HCT116 (cell line): ENCODE measurements at regions of chr1 and their contacts with region 1.

Region 1: DNA sequence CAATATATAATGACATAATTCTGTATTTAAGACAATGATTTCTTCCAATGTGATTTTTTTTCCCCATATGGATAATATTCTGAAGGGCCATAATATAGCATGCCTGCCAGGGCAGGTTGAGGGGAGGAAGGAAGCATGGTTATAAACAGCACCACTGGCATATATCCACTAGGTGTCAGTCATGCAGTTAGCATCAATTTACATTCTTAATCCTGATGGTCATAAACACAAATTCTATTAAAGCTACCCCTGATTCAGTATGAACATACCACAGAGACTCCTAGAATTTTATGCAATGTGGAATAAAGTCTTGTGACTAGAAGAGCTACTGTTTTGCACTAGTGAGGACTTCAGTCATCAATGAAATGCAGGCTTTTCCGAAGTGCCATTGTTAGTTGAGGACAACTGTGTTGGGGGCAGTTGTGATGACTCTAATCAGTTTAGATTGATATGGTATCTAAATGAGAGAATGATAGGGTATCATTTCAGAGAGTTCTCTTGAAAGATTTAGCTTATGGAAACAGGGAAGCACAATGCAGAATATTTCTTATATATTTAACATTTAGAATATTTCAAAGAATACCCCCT is 342.7 kb upstream of the NR5A2 start:
- DNase-seq: peak; percentile 74
- ATAC-seq: peak; percentile 91
- H3K4me3 ChIP-seq: peak overlapping the region in 1 of 2 experiments; percentile 18; a peak in 1 of 4 replicates
- H3K27ac ChIP-seq: peak overlapping the region; percentile 30; the same call in 1 of the 2 replicates
- H3K4me1 ChIP-seq: peaks cover 14 to 49% of the 10 kb centered on the region in 2 experiments
- H3K27me3 ChIP-seq: no peaks in the 10 kb centered on the region
- CTCF ChIP-seq: peak; percentile 67 to 88 (median 75)
- POLR2A ChIP-seq: no peak
- RAD21 ChIP-seq: peak; percentile 93

Region 2: GRCh38 chr1:199716729-199717128 is 31.9 kb after region 1 on chr1:
- CTCF ChIA-PET with region 1: no interaction called
- POLR2A ChIA-PET with region 1: no interaction called
- RAD21 ChIA-PET with region 1: no interaction called
- intact Hi-C with region 1: no loop called
- DNase-seq: no peak
- ATAC-seq: no peak
- H3K4me3 ChIP-seq: no peak overlapping the region
- H3K27ac ChIP-seq: no peak overlapping the region
- H3K4me1 ChIP-seq: no peaks in the 10 kb centered on the region
- H3K27me3 ChIP-seq: no peaks in the 10 kb centered on the region
- CTCF ChIP-seq: no peak
- POLR2A ChIP-seq: no peak
- RAD21 ChIP-seq: no peak

Region 3: DNA sequence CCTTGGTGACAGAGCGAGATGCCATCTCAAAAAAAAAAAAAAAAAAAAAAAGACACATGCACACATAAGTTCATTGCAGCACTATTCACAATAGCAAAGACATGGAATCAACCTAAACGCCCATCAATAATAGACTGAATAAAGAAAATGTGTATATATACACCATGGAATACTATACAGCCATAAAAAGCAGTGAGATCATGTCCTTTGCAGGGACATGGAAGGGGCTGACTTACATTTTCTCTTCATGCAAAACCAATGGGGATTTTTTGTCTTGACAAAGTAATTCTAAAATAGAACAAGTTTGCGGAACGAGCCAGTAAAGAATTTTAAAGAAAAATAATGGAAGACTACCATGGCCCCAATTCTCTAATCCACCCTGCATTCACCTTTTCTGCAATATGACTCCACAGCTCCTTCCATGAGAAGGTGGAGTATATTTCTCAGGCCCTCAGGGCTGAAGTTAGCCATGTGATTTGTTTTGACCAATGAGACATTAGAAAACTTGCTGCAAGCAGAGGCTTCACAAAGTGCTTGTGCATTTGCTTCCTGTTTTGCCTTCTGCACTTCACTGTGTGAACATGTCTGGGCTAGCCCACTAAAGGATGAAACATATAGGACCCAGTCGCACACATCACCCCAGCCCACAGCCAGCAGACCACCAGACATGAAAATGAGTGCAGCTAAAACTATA is 264.0 kb after region 1 on chr1:
- CTCF ChIA-PET with region 1: no interaction called
- POLR2A ChIA-PET with region 1: no interaction called
- RAD21 ChIA-PET with region 1: no interaction called
- intact Hi-C with region 1: loop called (anchors 10 kb)
- DNase-seq: peak; percentile 39
- ATAC-seq: peak; percentile 89
- H3K4me3 ChIP-seq: no peak overlapping the region
- H3K27ac ChIP-seq: peak overlapping the region; percentile 29; the same call in 1 of the 2 replicates
- H3K4me1 ChIP-seq: peaks cover 0 to 10% of the 10 kb centered on the region in 2 experiments; a peak in 2 of 4 replicates
- H3K27me3 ChIP-seq: no peaks in the 10 kb centered on the region
- CTCF ChIP-seq: no peak
- POLR2A ChIP-seq: no peak
- RAD21 ChIP-seq: no peak

Region 4: DNA sequence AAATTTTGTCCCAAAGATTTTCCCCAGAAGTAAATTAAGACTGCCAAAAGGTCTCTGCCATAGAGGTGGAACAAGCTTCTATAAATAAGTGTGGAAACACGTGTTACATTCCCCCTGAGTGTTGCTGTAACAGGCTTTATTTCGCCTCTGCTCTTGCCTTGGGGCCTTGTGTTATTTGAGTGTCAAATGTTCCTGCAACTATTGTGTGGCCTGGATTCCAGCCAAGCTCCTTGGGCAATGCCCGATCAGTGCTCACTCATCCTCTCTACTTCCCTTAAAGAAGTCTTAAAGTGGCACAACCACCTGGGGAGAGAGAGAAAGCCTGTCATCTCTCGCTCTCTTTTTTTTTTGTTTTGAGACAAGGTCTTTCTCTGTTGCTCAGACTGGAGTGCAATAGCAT is 499.4 kb after region 1 on chr1:
- CTCF ChIA-PET with region 1: interaction called, 10 read pairs
- POLR2A ChIA-PET with region 1: no interaction called
- RAD21 ChIA-PET with region 1: no interaction called
- intact Hi-C with region 1: loop called (anchors 1 kb)
- DNase-seq: peak; percentile 42
- ATAC-seq: peak; percentile 56
- H3K4me3 ChIP-seq: no peak overlapping the region
- H3K27ac ChIP-seq: no peak overlapping the region
- H3K4me1 ChIP-seq: peaks cover 22 to 51% of the 10 kb centered on the region in 2 experiments
- H3K27me3 ChIP-seq: no peaks in the 10 kb centered on the region
- CTCF ChIP-seq: no peak
- POLR2A ChIP-seq: no peak
- RAD21 ChIP-seq: peak; percentile 20; the same call in 1 of the 2 replicates

Region 5: DNA sequence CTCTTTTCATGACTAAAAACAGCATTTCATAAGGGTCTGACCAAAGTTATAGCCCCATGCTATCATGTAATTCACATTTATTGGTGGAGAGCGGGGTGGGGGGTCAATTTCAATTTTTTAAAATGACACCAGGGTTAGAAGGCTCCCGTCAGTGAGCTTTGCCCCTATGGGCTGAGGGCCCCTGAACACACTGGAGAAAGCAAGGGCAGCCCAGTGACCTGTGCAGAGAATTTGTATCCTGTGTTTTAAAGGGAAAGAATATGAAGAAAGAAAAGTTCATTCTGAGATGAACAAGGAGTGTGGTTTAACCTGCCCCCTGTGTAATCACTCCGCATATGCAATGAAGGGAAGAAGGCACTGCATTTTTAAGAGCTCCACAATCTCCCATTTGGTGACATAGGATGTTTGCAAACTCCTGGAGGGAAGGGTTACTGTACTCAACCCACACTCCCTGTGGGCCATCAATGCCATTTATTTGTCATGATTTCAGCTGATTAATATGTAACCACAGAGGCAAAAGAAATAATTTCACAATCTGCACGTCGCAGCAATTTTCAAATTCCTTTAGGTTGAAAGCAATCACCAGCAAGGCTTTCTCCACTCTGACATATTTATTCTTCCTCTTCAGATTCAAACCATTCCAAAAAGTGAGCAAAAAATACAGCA is 629.4 kb after region 1 on chr1:
- CTCF ChIA-PET with region 1: no interaction called
- POLR2A ChIA-PET with region 1: no interaction called
- RAD21 ChIA-PET with region 1: no interaction called
- intact Hi-C with region 1: loop called (anchors 5 kb)
- DNase-seq: no peak
- ATAC-seq: no peak
- H3K4me3 ChIP-seq: no peak overlapping the region
- H3K27ac ChIP-seq: no peak overlapping the region
- H3K4me1 ChIP-seq: no peaks in the 10 kb centered on the region
- H3K27me3 ChIP-seq: no peaks in the 10 kb centered on the region
- CTCF ChIP-seq: no peak
- POLR2A ChIP-seq: no peak
- RAD21 ChIP-seq: no peak

Region 6: DNA sequence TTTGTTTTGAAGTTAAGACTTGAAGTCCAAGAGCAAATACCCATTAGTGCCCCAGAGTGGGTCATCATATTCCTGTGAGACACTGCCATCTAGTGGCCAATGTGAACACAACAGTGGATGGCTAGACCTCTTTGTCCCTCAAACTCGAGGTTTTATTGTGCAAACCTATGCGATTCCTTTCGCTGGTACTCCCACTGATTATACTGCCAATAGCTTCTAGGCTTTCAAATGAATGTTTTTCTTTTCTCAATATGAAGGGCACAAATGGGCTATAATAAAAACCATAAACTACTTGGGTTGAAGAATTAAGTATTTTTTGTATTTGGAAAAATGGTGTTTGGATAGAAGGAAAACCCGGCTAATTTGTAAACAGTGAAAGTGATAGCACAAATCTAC is 825.4 kb after region 1 on chr1:
- CTCF ChIA-PET with region 1: interaction called, 3 read pairs
- POLR2A ChIA-PET with region 1: no interaction called
- RAD21 ChIA-PET with region 1: no interaction called
- intact Hi-C with region 1: loop called (anchors 5 kb)
- DNase-seq: peak; percentile 72
- ATAC-seq: peak; percentile 98
- H3K4me3 ChIP-seq: no peak overlapping the region
- H3K27ac ChIP-seq: no peak overlapping the region
- H3K4me1 ChIP-seq: no peaks in the 10 kb centered on the region
- H3K27me3 ChIP-seq: no peaks in the 10 kb centered on the region
- CTCF ChIP-seq: peak; percentile 77 to 95 (median 78)
- POLR2A ChIP-seq: no peak
- RAD21 ChIP-seq: peak; percentile 94